ENCODE measurements at regions of chr2 and their contacts with region 1.

Region 1: GRCh38 chr2:201158111-201158929 is 24.6 kb upstream of the CASP10 start:
- DNase-seq: peak; percentile 87
- H3K4me3 Mint-ChIP-seq: no peak overlapping the region
- H3K27ac Mint-ChIP-seq: peak overlapping the region; percentile 69
- H3K4me1 Mint-ChIP-seq: peaks cover 8% of the 10 kb centered on the region
- H3K27me3 Mint-ChIP-seq: no peaks in the 10 kb centered on the region
- CTCF ChIP-seq: peak; percentile 62

Region 2: GRCh38 chr2:200787348-200788120 is 370.8 kb before region 1 on chr2:
- CTCF ChIA-PET with region 1: no interaction called
- POLR2A ChIA-PET with region 1: no interaction called
- intact Hi-C with region 1: no loop called
- DNase-seq: peak; percentile 93
- H3K4me3 Mint-ChIP-seq: peak overlapping the region; percentile 10
- H3K27ac Mint-ChIP-seq: peak overlapping the region; percentile 89
- H3K4me1 Mint-ChIP-seq: peaks cover 19% of the 10 kb centered on the region
- H3K27me3 Mint-ChIP-seq: no peaks in the 10 kb centered on the region
- CTCF ChIP-seq: no peak

Region 3: GRCh38 chr2:200901459-200902072 is 256.8 kb before region 1 on chr2:
- CTCF ChIA-PET with region 1: interaction called, 11 read pairs
- POLR2A ChIA-PET with region 1: interaction called, 3 read pairs
- intact Hi-C with region 1: loop called (anchors 1 kb)
- DNase-seq: peak; percentile 90
- H3K4me3 Mint-ChIP-seq: no peak overlapping the region
- H3K27ac Mint-ChIP-seq: no peak overlapping the region
- H3K4me1 Mint-ChIP-seq: no peaks in the 10 kb centered on the region
- H3K27me3 Mint-ChIP-seq: no peaks in the 10 kb centered on the region
- CTCF ChIP-seq: peak; percentile 88

Region 4: GRCh38 chr2:200993097-200993496 is 165.2 kb before region 1 on chr2:
- CTCF ChIA-PET with region 1: no interaction called
- POLR2A ChIA-PET with region 1: no interaction called
- intact Hi-C with region 1: no loop called
- DNase-seq: no peak
- H3K4me3 Mint-ChIP-seq: no peak overlapping the region
- H3K27ac Mint-ChIP-seq: no peak overlapping the region
- H3K4me1 Mint-ChIP-seq: no peaks in the 10 kb centered on the region
- H3K27me3 Mint-ChIP-seq: no peaks in the 10 kb centered on the region
- CTCF ChIP-seq: no peak

Region 5: DNA sequence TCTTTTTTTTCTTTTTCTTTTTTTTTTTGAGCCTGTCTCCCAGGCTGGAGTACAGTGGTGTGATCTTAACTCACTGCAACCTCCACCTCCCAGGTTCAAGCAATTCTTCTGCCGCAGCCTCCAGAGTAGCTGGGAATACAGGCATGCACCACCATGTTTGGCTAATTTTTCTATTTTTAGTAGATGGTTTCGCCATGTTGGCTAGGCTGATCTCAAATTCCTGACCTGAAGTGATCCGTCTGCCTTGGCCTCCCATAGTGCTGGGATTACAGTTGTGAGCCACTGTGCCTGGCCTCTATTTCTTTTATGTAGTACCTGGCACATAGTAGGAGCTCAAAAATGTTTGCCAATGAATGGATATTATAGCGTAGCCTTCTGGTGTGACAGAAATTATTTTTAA is 49.1 kb before region 1 on chr2:
- CTCF ChIA-PET with region 1: interaction called, 46 read pairs
- POLR2A ChIA-PET with region 1: interaction called, 198 read pairs
- intact Hi-C with region 1: no loop called
- DNase-seq: no peak
- H3K4me3 Mint-ChIP-seq: no peak overlapping the region
- H3K27ac Mint-ChIP-seq: no peak overlapping the region
- H3K4me1 Mint-ChIP-seq: no peaks in the 10 kb centered on the region
- H3K27me3 Mint-ChIP-seq: no peaks in the 10 kb centered on the region
- CTCF ChIP-seq: no peak

Region 6: GRCh38 chr2:201130524-201131186 is 27.7 kb before region 1 on chr2:
- CTCF ChIA-PET with region 1: interaction called, 21 read pairs
- POLR2A ChIA-PET with region 1: interaction called, 5 read pairs
- intact Hi-C with region 1: no loop called
- DNase-seq: peak; percentile 78
- H3K4me3 Mint-ChIP-seq: no peak overlapping the region
- H3K27ac Mint-ChIP-seq: peak overlapping the region; percentile 63
- H3K4me1 Mint-ChIP-seq: peaks cover 48% of the 10 kb centered on the region
- H3K27me3 Mint-ChIP-seq: no peaks in the 10 kb centered on the region
- CTCF ChIP-seq: no peak

Region 7: GRCh38 chr2:201182650-201183364 is 24.5 kb after region 1 on chr2 and contains the start of gene CASP10:
- CTCF ChIA-PET with region 1: interaction called, 17 read pairs
- POLR2A ChIA-PET with region 1: no interaction called
- intact Hi-C with region 1: no loop called
- DNase-seq: peak; percentile 68
- H3K4me3 Mint-ChIP-seq: peak within 1 kb of the TSS; percentile 46
- H3K27ac Mint-ChIP-seq: no peak within 1 kb of the TSS
- H3K4me1 Mint-ChIP-seq: no peaks in the 10 kb centered on the region
- H3K27me3 Mint-ChIP-seq: no peaks in the 10 kb centered on the region
- CTCF ChIP-seq: no peak
- total RNA-seq, gene CASP10: 0.19 and 0.27 TPM in 2 replicates

Region 8: GRCh38 chr2:201275990-201276389 is 117.7 kb after region 1 on chr2:
- CTCF ChIA-PET with region 1: no interaction called
- POLR2A ChIA-PET with region 1: no interaction called
- intact Hi-C with region 1: no loop called
- DNase-seq: no peak
- H3K4me3 Mint-ChIP-seq: no peak overlapping the region
- H3K27ac Mint-ChIP-seq: no peak overlapping the region
- H3K4me1 Mint-ChIP-seq: no peaks in the 10 kb centered on the region
- H3K27me3 Mint-ChIP-seq: no peaks in the 10 kb centered on the region
- CTCF ChIP-seq: no peak

Measured in MCF 10A (cell line).